Dorsolateral prefrontal cortex (tissue), 120 donors: ENCODE measurements at regions of chr7 and their contacts with region 1.

Region 1: DNA sequence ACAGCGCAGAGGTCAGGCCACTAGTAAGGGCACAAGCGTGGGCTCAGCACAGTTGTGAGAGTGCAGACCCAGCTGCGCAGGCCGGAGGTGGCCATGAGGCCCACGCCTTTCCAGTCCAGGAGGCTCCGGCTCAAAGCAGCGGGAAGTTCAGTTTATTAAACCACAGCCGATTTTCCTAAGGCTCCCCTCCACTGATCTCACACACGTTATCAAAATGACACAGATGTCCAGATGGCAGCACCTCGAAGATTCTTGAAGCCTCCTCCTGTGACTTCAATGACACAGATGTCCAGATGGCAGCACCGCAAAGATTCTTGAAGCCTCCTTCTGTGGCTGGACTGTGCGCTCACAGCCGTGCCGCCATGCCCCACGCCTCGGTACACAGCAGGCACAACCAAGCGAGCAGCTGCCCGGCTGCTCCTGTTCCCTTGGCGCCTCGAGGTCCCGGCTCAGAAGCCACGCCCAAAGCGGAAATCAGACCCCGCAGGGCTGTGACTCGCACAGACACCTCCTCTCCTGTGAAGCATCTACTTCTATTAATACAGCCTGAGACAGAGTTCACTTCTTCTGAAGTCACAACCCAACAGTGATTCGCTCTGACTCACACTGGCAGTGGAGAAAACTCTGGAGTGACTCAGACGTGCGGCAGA is 122.7 kb downstream of the MAD1L1 start:
- DNase-seq: peak in 3 of 10 donors; percentile 50 to 66 (median 55)
- H3K4me3 ChIP-seq: no peak overlapping the region
- H3K27ac ChIP-seq: peak overlapping the region in 58 of 59 donors; percentile 12 to 100 (median 98)
- H3K27me3 ChIP-seq: no peaks in the 10 kb centered on the region
- CTCF ChIP-seq: no peak

Region 2: GRCh38 chr7:1919539-1920265 is 190.4 kb before region 1 on chr7:
- intact Hi-C with region 1: loop called in 1 of 2 experiments (anchors 5 kb)
- DNase-seq: peak in 8 of 10 donors; percentile 53 to 86 (median 68)
- H3K4me3 ChIP-seq: peak overlapping the region in 27 of 59 donors; percentile 4 to 50 (median 18)
- H3K27ac ChIP-seq: peak overlapping the region in 27 of 59 donors; percentile 4 to 73 (median 54)
- H3K27me3 ChIP-seq: no peaks in the 10 kb centered on the region
- CTCF ChIP-seq: no peak

Region 3: GRCh38 chr7:2063575-2064257 is 46.3 kb before region 1 on chr7:
- intact Hi-C with region 1: no loop called
- DNase-seq: peak in 3 of 10 donors; percentile 24 to 63 (median 33)
- H3K4me3 ChIP-seq: no peak overlapping the region
- H3K27ac ChIP-seq: peak overlapping the region in 16 of 59 donors; percentile 3 to 69 (median 30)
- H3K27me3 ChIP-seq: no peaks in the 10 kb centered on the region
- CTCF ChIP-seq: peak in 34 of 56 donors; percentile 9 to 57 (median 32)

Region 4: GRCh38 chr7:2157468-2158279 is 47.6 kb after region 1 on chr7:
- intact Hi-C with region 1: loop called (anchors 5 to 10 kb)
- DNase-seq: peak; percentile 41 to 89 (median 76)
- H3K4me3 ChIP-seq: no peak overlapping the region
- H3K27ac ChIP-seq: peak overlapping the region; percentile 71 to 99 (median 94)
- H3K27me3 ChIP-seq: no peaks in the 10 kb centered on the region
- CTCF ChIP-seq: peak in 3 of 56 donors; percentile 8 to 17 (median 10)

Region 5: DNA sequence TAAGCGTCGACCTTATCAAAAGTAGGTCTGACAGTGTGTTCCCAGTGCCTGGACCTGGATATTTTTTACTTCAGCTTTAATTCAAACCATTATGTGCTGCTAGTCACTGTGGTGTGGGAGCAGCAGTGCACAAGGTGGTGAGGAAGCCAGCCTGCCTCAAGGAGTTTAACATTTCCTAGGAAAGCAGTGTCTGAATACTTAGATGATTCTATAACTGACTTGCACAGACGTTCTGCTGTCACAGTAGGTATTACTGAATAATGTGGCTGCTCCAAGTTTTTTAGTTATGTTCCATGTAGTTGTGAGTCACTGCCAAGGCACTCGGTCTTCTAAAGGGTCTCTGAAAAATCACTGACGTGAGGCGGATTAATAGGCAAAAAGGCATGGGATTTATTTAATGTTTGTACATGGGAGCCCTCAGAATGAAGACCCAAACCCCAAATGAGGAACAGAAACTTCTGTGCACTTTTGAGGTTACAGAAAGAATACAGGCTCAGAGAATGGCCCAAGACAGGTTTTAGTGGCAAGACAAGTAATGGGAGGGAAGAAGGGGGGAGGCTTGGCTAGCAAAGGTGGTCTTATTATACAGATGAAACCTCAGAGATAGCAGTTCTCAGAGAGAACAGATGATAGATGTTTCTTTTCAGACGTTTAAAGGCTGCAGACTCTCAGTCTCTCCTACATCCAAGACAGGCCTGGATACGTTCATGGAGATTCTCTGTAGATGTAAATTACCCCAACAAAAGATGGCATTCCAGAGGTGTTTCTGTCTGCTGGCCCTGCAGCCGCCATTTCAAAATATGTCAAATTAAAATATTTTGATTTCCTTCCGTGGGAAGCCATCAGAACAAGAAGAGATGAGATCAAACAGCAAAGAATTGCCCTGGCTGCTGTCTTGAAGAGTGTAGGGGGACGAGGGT is 1400.3 kb after region 1 on chr7:
- intact Hi-C with region 1: no loop called
- DNase-seq: no peak
- H3K4me3 ChIP-seq: no peak overlapping the region
- H3K27ac ChIP-seq: no peak overlapping the region
- H3K27me3 ChIP-seq: no peaks in the 10 kb centered on the region
- CTCF ChIP-seq: no peak